ENCODE measurements at regions of chr17 and their contacts with region 1.

Region 1: GRCh38 chr17:38667099-38667786 is 7.5 kb downstream of the EPOP start:
- DNase-seq: peak; percentile 82 to 89
- ATAC-seq: peak; percentile 55 to 68; a peak in 5 of 6 replicates
- H3K4me3 ChIP-seq: no peak overlapping the region
- H3K27ac ChIP-seq: no peak overlapping the region
- H3K4me1 ChIP-seq: peaks cover 14% of the 10 kb centered on the region; the same call in 2 of the 3 replicates
- CTCF ChIP-seq: peak; percentile 100
- EP300 ChIP-seq: no peak
- POLR2A ChIP-seq: no peak
- RAD21 ChIP-seq: peak; percentile 99 to 100

Region 2: DNA sequence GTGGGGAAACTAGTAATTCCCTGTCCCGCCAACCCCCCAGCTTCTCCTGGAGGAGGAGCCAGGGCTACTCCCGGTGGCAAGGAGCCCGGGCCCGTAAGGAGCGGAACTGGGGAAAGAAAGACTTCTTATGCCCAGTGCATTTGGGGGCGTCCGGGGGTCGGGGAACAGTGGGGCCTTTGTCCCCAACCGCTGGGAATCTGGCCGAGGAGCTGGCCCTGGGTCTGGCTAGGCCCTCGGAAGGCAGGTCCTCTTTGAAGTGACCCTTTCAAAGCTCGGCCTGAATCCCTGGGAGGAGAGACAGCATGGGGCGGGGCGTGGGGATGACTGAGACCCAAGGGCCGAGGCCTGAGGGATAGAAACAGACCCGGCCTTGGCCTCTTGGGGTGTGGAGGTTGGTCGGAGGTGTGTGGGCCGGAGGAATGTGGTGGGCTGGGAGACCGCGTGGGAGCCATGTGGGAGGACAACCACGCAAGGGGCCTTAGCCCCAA is 233.0 kb before region 1 on chr17:
- CTCF ChIA-PET with region 1: interaction called, 12 read pairs
- POLR2A ChIA-PET with region 1: no interaction called
- DNase-seq: no peak
- ATAC-seq: no peak
- H3K4me3 ChIP-seq: no peak overlapping the region
- H3K27ac ChIP-seq: no peak overlapping the region
- H3K4me1 ChIP-seq: peaks cover 18% of the 10 kb centered on the region
- CTCF ChIP-seq: no peak
- EP300 ChIP-seq: no peak
- POLR2A ChIP-seq: no peak
- RAD21 ChIP-seq: no peak

Region 3: GRCh38 chr17:38498186-38498752 is 169.0 kb before region 1 on chr17:
- CTCF ChIA-PET with region 1: interaction called, 128 read pairs
- POLR2A ChIA-PET with region 1: no interaction called
- DNase-seq: no peak
- ATAC-seq: no peak
- H3K4me3 ChIP-seq: no peak overlapping the region
- H3K27ac ChIP-seq: no peak overlapping the region
- H3K4me1 ChIP-seq: no peaks in the 10 kb centered on the region
- CTCF ChIP-seq: no peak
- EP300 ChIP-seq: no peak
- POLR2A ChIP-seq: no peak
- RAD21 ChIP-seq: no peak

Region 4: DNA sequence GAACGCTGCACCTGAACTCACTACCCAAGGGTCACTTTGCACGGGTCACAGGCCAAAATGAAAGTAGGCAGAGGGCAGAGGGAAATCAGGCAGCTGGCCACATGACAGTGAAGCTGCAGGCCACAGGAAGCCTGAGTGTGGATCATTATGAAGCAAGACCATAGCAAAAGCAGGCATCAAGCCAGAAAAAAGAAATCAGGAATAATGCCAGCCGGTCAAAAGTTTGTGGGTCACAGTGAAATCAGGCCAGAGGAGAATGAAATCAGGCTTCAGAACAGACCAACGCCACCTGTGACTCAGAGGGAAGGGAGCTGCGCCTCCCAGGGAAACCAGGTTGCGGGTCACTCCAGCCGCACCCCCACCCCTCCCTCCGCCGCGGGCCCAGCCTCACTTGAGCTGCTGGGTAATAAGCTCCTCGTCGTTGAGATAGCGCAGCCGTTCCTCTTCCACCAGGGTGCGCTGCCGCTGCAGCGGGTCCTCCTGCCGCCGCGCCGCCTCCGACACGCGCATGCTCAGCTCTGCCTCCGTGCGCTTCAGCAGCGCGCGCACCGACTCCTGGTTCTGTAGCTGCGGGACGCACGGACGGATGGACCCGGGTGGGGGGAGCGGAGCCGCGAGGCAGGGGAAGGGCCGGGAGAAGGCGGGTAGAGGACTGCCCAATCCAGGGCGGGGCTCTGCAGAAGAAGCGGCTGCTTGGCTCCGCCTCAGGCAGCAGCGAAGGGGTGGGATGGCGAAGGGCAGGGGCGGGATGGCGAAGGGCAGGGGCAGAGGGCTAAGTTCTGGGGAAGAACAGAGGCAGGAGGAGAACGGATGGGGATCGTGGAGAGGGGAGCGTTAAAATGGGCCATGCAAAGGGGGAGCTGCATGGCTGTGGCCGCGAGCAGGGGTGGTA is 109.2 kb before region 1 on chr17:
- CTCF ChIA-PET with region 1: interaction called, 435 read pairs
- POLR2A ChIA-PET with region 1: interaction called, 8 read pairs
- DNase-seq: peak; percentile 98 to 99
- ATAC-seq: peak; percentile 77 to 90
- H3K4me3 ChIP-seq: peak overlapping the region; percentile 44
- H3K27ac ChIP-seq: peak overlapping the region; percentile 68 to 88
- H3K4me1 ChIP-seq: peaks cover 16% of the 10 kb centered on the region
- CTCF ChIP-seq: peak; percentile 95
- EP300 ChIP-seq: no peak
- POLR2A ChIP-seq: no peak
- RAD21 ChIP-seq: peak; percentile 84 to 89

Region 5: GRCh38 chr17:38605888-38606645 is 61.2 kb before region 1 on chr17 and contains the start of gene SRCIN1:
- CTCF ChIA-PET with region 1: interaction called, 207 read pairs
- POLR2A ChIA-PET with region 1: no interaction called
- DNase-seq: peak; percentile 70
- ATAC-seq: peak; percentile 21 to 66
- H3K4me3 ChIP-seq: peak within 1 kb of the TSS; percentile 71
- H3K27ac ChIP-seq: peak within 1 kb of the TSS; percentile 76 to 93
- H3K4me1 ChIP-seq: peaks cover 25% of the 10 kb centered on the region
- CTCF ChIP-seq: peak; percentile 100
- EP300 ChIP-seq: no peak
- POLR2A ChIP-seq: peak; percentile 42
- RAD21 ChIP-seq: peak; percentile 44 to 66
- polyA plus RNA-seq, gene SRCIN1: 1.3 and 1.4 TPM in 2 replicates

Region 6: DNA sequence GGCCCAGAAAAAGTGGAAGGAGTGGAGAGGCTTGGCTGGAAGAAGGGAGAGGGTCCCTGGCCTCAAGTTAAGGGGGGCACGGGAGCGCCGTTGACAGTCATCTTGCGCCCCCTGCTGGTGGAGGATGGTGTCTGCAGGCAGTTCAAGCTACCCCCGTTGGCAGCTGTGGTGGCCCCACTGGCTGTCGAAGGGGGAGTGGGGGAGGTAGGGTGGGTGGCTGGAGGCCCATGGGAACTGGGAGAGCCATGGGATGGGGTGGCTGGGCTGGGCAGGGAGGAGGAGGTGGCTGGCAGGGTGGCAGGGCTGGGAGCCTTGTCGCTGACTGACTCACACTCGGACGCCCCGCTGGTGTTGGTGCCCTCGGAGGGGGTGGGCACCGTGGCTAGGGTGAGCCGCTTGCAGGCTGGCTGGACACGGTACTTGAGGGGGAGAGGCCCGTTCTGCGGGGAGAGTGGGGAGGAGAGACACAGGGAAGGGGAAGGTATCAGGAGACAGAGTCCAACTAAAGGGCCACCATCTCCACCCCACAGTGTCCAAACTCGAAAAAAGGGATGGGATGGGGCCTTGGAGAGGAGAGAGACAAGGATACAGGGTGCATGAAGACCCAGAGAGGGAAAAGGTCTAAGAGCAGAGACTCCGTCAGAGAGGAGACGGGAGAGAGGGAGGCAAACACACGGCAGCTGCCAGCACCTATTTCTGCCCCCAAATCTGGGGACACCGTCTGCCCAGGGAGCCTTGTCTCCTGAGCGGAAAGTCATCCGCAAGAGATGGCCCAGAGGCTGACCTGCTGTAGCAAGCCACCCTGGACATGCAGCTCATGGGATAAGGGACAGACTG is 68.1 kb after region 1 on chr17:
- CTCF ChIA-PET with region 1: interaction called, 18 read pairs
- POLR2A ChIA-PET with region 1: no interaction called
- DNase-seq: peak; percentile 50 to 93
- ATAC-seq: peak in 1 of 2 experiments; percentile 32; a peak in 3 of 6 replicates
- H3K4me3 ChIP-seq: no peak overlapping the region
- H3K27ac ChIP-seq: peak overlapping the region in 1 of 2 experiments; percentile 34; a peak in 1 of 6 replicates
- H3K4me1 ChIP-seq: peaks cover 35% of the 10 kb centered on the region
- CTCF ChIP-seq: peak; percentile 96
- EP300 ChIP-seq: no peak
- POLR2A ChIP-seq: no peak
- RAD21 ChIP-seq: peak; percentile 71 to 78